ENCODE measurements at regions of chr12 and their contacts with region 1.

Region 1: DNA sequence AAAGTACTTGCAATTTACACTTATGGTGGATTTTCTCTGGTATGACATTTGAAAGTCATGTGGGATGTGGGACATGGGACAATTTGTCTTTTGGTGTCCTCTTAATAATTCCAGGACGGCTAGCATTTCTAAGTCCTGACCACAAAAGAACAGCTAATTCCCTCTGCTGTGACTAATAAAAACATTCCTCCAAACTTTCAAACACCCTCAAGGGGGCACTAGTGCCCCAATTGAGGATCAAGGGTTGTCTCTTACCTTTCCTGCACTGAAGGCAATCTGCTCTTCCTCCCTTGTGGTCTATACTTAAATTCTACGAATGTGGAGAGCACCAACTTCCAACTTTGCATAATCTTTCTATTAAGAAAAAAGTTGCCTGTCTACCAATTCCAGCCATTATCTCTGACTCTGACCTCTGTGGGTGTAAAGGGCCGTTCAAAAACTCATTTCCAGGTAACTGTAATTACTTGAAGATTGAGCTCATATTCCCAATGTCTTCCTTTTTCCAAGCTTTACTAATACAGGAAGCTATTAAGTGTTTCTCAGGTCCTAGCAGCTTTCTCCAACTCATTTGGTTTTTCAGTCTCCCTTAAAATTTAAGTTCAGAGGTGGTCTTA is 210.2 kb downstream of the PTPRO start:
- DNase-seq: no peak
- ATAC-seq: peak in 3 of 8 donors; percentile 39 to 61 (median 52)
- H3K4me3 ChIP-seq: no peak overlapping the region
- H3K27ac ChIP-seq: no peak overlapping the region
- H3K4me1 ChIP-seq: peaks cover 0 to 28% (median 0%) of the 10 kb centered on the region in 9 donors
- H3K27me3 ChIP-seq: no peaks in the 10 kb centered on the region
- CTCF ChIP-seq: peak in 8 of 9 donors; percentile 9 to 62 (median 52)

Region 2: GRCh38 chr12:15575671-15576541 is 43.4 kb after region 1 on chr12:
- intact Hi-C with region 1: loop called in 6 of 10 experiments (anchors 5 to 10 kb)
- DNase-seq: no peak
- ATAC-seq: peak in 4 of 8 donors; percentile 40 to 84 (median 52)
- H3K4me3 ChIP-seq: no peak overlapping the region
- H3K27ac ChIP-seq: no peak overlapping the region
- H3K4me1 ChIP-seq: peaks cover 0 to 11% (median 0%) of the 10 kb centered on the region in 9 donors
- H3K27me3 ChIP-seq: peaks cover 0 to 10% (median 3%) of the 10 kb centered on the region in 7 donors
- CTCF ChIP-seq: no peak

Region 3: GRCh38 chr12:15584366-15585041 is 52.0 kb after region 1 on chr12:
- intact Hi-C with region 1: loop called in 8 of 10 experiments (anchors 2 to 10 kb)
- DNase-seq: no peak
- ATAC-seq: peak in 1 of 8 donors; percentile 22
- H3K4me3 ChIP-seq: no peak overlapping the region
- H3K27ac ChIP-seq: no peak overlapping the region
- H3K4me1 ChIP-seq: no peaks in the 10 kb centered on the region
- H3K27me3 ChIP-seq: peaks cover 0 to 23% (median 0%) of the 10 kb centered on the region in 7 donors
- CTCF ChIP-seq: peak; percentile 36 to 80 (median 69)

Region 4: DNA sequence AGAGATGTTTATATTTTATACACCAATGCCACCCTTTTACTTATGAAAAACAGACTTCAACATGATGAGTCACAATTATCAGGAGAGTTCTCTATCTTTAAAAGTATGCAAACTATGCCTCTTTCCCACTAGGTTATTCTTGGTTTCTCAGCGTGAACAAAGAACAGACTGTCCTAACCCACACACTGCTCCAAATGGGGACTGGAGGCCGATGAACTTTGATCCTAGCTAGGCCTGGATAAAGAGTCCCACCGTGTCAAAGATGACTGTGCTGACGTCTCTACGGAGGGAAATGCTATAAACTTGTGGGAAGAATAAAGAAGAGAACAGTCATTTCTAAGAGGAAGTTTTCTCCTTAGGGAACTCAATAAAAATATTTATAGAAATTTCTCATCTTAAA is 96.6 kb after region 1 on chr12:
- intact Hi-C with region 1: no loop called
- DNase-seq: peak; percentile 14 to 82
- ATAC-seq: peak; percentile 91 to 98 (median 97)
- H3K4me3 ChIP-seq: no peak overlapping the region
- H3K27ac ChIP-seq: peak overlapping the region in 9 of 10 donors; percentile 61 to 87 (median 81)
- H3K4me1 ChIP-seq: peaks cover 0 to 61% (median 37%) of the 10 kb centered on the region in 9 donors
- H3K27me3 ChIP-seq: no peaks in the 10 kb centered on the region
- CTCF ChIP-seq: no peak

Region 5: GRCh38 chr12:15856097-15856982 is 323.9 kb after region 1 on chr12:
- intact Hi-C with region 1: loop called in 1 of 10 experiments (anchors 5 kb)
- DNase-seq: peak in 1 of 2 donors; percentile 62
- ATAC-seq: peak in 6 of 8 donors; percentile 57 to 77 (median 72)
- H3K4me3 ChIP-seq: no peak overlapping the region
- H3K27ac ChIP-seq: peak overlapping the region in 3 of 10 donors; percentile 1 to 48 (median 23)
- H3K4me1 ChIP-seq: peaks cover 0 to 3% (median 0%) of the 10 kb centered on the region in 9 donors
- H3K27me3 ChIP-seq: peaks cover 0 to 13% (median 5%) of the 10 kb centered on the region in 7 donors
- CTCF ChIP-seq: peak; percentile 64 to 96 (median 83)

Measured in heart right ventricle (tissue), 16 donors.